ENCODE measurements at regions of chr1 and their contacts with region 1.

Region 1: DNA sequence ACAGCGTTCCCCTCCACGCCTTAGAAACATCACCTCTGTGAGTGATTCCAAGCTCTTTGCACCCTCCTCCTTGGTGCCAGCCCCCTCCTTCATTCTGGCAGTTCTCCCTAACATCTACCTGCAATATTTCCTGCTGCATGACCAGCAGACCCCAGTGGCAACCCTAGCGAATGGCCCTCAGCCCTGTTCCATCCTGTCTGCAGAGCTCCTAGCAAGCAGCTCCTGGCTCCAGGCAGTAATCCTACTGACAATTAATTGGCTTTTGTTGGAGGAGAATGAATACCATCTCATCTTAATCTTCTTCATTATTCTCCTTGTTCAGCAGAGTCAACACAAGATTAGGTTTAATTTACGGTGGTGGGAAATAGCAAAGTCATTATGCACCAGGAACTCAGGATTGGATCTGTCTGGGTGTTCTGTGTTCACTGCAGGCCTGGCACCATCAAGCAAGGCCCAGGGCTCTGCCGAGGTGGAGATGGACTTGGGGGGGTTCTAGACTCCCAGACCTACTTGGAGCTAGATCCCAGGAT is 12.4 kb downstream of the FBXO2 start:
- DNase-seq: no peak
- H3K4me3 Mint-ChIP-seq: no peak overlapping the region
- H3K27ac Mint-ChIP-seq: no peak overlapping the region
- H3K4me1 Mint-ChIP-seq: no peaks in the 10 kb centered on the region
- H3K27me3 Mint-ChIP-seq: peaks cover 52% of the 10 kb centered on the region
- CTCF ChIP-seq: no peak

Region 2: DNA sequence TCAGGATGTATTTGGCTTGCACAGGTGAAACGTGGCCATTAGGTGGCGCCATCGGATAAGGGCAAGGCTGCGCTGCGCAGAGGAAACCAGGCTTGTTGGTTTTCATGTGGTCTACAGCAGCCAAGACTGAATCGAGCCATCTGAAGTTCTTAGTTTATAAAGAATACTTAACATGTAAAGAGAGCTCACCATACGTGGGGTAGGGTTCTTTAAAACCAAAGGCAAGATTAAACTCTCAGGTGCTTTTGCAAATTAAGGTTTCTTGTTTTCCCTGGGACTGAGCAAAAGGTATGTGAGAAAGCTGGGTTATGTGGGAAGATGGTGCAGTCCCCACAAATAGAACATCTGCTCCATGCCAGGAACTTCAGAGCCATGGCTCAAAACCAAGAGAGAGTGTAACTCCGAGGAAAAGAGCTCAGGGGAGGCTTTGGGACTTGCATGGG is 604.1 kb before region 1 on chr1:
- CTCF ChIA-PET with region 1: interaction called, 7 read pairs
- intact Hi-C with region 1: loop called (anchors 2 kb)
- DNase-seq: peak; percentile 76
- H3K4me3 Mint-ChIP-seq: no peak overlapping the region
- H3K27ac Mint-ChIP-seq: no peak overlapping the region
- H3K4me1 Mint-ChIP-seq: no peaks in the 10 kb centered on the region
- H3K27me3 Mint-ChIP-seq: no peaks in the 10 kb centered on the region
- CTCF ChIP-seq: peak; percentile 76

Region 3: GRCh38 chr1:11099310-11100149 is 542.3 kb before region 1 on chr1 and contains the start of gene EXOSC10:
- CTCF ChIA-PET with region 1: no interaction called
- intact Hi-C with region 1: no loop called
- DNase-seq: peak; percentile 90
- H3K4me3 Mint-ChIP-seq: peak within 1 kb of the TSS; percentile 71
- H3K27ac Mint-ChIP-seq: peak within 1 kb of the TSS; percentile 88
- H3K4me1 Mint-ChIP-seq: no peaks in the 10 kb centered on the region
- H3K27me3 Mint-ChIP-seq: no peaks in the 10 kb centered on the region
- CTCF ChIP-seq: no peak
- total RNA-seq, gene EXOSC10: 50.8 and 56.4 TPM in 2 replicates

Region 4: DNA sequence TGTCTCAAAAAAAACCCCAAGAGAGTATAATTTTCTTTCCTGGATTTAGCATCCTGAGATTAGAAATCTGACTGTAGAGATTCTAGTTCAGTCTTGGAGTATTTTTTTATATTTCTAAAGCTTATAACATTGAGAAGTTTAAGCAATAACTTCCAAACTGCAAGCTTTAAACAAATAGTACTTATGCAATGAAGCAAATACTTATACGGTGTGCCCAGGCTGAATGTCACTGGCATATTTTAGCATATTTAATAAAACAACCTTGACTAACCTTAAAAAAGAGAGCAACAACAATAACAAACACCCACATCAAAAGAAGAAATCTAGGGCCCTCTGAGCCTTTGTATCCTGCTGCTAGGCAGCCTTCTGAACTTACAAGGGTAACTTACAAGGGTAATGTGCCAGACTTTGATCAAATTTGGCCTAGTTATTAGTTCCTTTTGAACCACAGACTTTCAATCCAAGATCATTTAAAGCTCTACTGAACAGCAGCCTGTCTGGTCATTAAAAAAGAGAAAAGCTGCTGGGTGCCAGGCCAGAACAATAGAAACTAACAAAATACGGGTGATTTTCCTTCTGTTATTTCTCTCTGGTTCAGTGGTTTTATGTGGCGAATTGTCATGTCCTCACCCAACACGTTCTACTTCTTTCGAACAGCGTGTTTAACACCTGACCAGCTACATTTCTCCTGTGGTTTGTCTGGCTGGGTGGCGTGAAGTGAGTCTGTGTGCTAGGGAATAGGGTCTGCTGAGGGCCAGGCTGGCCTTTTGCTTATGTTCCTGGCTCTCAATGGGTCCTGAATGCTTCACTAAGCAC is 395.7 kb before region 1 on chr1:
- CTCF ChIA-PET with region 1: interaction called, 4 read pairs
- intact Hi-C with region 1: loop called (anchors 1 kb)
- DNase-seq: no peak
- H3K4me3 Mint-ChIP-seq: no peak overlapping the region
- H3K27ac Mint-ChIP-seq: no peak overlapping the region
- H3K4me1 Mint-ChIP-seq: no peaks in the 10 kb centered on the region
- H3K27me3 Mint-ChIP-seq: no peaks in the 10 kb centered on the region
- CTCF ChIP-seq: no peak

Region 5: GRCh38 chr1:11339346-11340232 is 302.3 kb before region 1 on chr1:
- CTCF ChIA-PET with region 1: interaction called, 3 read pairs
- intact Hi-C with region 1: loop called (anchors 5 kb)
- DNase-seq: no peak
- H3K4me3 Mint-ChIP-seq: no peak overlapping the region
- H3K27ac Mint-ChIP-seq: no peak overlapping the region
- H3K4me1 Mint-ChIP-seq: no peaks in the 10 kb centered on the region
- H3K27me3 Mint-ChIP-seq: peaks cover 81% of the 10 kb centered on the region
- CTCF ChIP-seq: no peak

Measured in Calu3 (cell line).